ENCODE measurements at regions of chr6 and their contacts with region 1.

Region 1: DNA sequence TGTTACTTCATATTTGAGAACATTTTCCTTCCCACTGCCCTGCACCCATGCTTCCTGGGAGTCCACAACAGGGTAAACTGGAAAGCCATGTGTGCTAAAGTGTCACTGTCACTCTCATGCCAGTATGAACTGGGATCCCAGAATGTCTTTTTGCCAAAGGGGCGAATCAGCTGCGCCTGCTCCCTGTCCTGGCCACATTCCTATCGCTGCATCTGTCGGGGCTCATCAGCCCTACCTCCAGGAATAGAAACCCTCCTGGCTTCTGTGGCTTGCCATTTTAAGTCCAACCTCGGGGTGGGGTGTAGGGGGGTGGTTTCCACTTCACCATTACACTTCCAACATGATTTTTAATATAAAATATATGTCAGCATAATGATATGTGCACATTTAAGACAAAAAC is 933 bp downstream of the KLHL31 start:
- DNase-seq: no peak
- H3K4me3 ChIP-seq: no peak overlapping the region
- H3K27ac ChIP-seq: no peak overlapping the region
- H3K27me3 ChIP-seq: peaks cover 7% of the 10 kb centered on the region
- CTCF ChIP-seq: no peak

Region 2: GRCh38 chr6:54876365-54876764 is 1211.7 kb after region 1 on chr6:
- CTCF ChIA-PET with region 1: no interaction called
- POLR2A ChIA-PET with region 1: interaction called, 14 read pairs
- DNase-seq: no peak
- H3K4me3 ChIP-seq: no peak overlapping the region
- H3K27ac ChIP-seq: no peak overlapping the region
- H3K27me3 ChIP-seq: no peaks in the 10 kb centered on the region
- CTCF ChIP-seq: no peak

Measured in AG04450 (cell line).